CD8-positive, alpha-beta T cell (primary cell): ENCODE measurements at regions of chr13 and their contacts with region 1.

Region 1: DNA sequence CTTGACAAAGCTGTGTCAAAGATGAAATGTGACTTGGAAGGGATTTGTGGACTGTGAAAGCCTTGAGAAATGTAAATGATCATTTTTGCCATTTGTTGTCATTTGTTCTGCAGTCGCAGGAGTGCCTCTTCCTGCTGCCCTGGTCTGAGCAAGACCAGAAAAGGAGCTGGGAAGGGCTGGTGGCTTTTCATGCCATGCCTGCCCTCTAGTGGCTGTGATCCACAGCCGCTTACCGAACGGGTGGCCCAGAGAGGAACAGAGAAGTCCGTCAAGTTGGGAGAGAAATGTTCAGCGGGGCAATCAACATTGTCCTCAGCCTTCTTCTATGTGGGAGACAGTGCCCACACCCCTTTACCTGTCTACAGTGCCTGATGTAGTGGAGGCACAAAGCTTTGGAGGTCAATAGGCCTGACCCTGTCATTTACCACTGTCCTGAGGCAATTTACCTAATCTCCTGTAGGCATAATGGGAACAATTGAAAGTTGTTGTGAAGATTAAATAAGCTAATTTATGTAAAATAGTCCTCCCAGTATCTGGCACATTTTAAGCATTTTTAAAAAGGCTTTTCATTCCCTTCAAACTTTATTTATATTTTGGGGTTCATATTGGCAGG is 224.4 kb downstream of the B3GLCT start:
- DNase-seq: peak; percentile 7 to 64 (median 42)
- ATAC-seq: peak; percentile 57
- H3K4me3 ChIP-seq: no peak overlapping the region
- H3K4me3 Mint-ChIP-seq: no peak overlapping the region
- H3K27ac ChIP-seq: no peak overlapping the region
- H3K27ac Mint-ChIP-seq: no peak overlapping the region
- H3K4me1 ChIP-seq: no peaks in the 10 kb centered on the region
- H3K4me1 Mint-ChIP-seq: peaks cover 4% of the 10 kb centered on the region
- H3K27me3 ChIP-seq: no peaks in the 10 kb centered on the region
- H3K27me3 Mint-ChIP-seq: peaks cover 5% of the 10 kb centered on the region
- CTCF ChIP-seq: peak; percentile 61

Region 2: DNA sequence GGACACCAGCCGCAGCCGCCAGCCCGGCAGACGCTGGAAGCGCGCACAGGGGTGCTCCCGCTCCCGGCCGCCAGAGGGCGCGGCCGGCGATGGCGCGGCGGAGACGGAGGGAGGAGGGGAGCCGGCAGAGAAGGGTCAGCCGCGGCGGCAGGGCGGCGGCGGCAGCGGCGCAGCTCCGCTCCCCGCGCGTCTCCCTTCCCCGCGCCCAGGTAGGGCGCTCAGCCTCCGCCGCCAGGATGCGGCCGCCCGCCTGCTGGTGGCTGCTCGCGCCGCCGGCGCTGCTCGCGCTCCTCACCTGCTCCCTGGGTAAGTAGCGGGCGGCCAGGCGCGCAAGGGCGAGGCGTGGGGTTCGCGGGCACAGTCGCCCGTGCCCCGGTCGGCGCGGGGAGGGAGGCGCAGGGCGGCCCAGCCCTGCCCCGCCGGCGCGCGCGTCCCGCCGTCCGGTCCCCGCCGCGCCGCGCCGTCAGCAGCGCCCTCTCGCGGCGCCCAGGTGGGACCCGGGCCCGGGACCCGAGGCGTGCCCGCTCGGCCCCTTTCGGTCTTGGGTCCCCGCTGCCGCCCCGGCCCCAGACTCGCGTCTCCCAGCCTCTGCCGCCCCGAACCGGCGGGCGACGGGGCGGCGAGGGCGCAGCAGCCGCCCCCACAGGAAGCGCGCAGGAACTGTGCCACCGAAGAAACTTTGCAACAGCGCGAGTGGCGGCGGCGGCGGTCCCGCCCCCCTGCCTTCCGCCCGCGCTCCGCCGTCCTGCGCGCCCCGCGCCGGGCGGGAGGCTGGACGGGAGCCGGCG is 224.2 kb before region 1 on chr13 and contains the start of gene B3GLCT:
- CTCF ChIA-PET with region 1: no interaction called
- POLR2A ChIA-PET with region 1: no interaction called
- intact Hi-C with region 1: loop called in 1 of 2 experiments (anchors 1 kb)
- DNase-seq: peak; percentile 71 to 91 (median 80)
- ATAC-seq: peak; percentile 78
- H3K4me3 ChIP-seq: peak within 1 kb of the TSS; percentile 65 to 81
- H3K4me3 Mint-ChIP-seq: peak within 1 kb of the TSS; percentile 84
- H3K27ac ChIP-seq: peak within 1 kb of the TSS; percentile 88
- H3K27ac Mint-ChIP-seq: peak within 1 kb of the TSS; percentile 92
- H3K4me1 ChIP-seq: peaks cover 18% of the 10 kb centered on the region
- H3K4me1 Mint-ChIP-seq: peaks cover 29% of the 10 kb centered on the region
- H3K27me3 ChIP-seq: no peaks in the 10 kb centered on the region
- H3K27me3 Mint-ChIP-seq: no peaks in the 10 kb centered on the region
- CTCF ChIP-seq: peak; percentile 94
- total RNA-seq, gene B3GLCT: 5.0 TPM